ENCODE measurements at regions of chrX and their contacts with region 1.

Region 1: DNA sequence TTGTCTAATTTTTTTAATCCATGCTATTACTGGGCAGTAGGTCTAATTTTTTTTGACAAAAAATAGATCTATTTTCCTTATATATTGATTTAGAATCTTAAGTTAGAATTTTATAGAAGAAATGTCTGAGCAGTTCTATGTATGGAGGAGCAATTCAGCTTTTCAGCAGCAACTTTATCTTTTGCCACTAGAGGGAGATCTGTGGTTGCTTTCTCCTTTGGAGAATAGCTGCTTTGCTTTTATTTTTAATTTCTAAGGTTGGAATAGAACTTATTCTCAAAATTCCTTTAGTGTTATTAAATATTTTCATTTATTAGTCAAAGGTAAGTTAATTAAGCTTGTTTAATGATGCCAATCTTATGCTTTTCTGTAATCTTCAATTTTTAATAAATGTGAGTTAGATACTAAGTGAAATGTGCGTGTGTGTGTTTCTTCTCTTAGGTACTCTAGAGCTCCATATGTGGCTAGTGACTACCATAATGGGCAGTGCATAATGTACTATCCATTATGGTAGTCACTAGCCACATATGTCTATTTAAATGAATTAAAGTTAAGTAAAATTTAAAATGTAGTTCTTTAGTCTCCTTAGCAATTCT is 29.3 kb downstream of the FAM199X start:
- DNase-seq: peak; percentile 18
- H3K4me3 ChIP-seq: no peak overlapping the region
- H3K27ac ChIP-seq: no peak overlapping the region
- H3K4me1 ChIP-seq: no peaks in the 10 kb centered on the region
- H3K27me3 ChIP-seq: no peaks in the 10 kb centered on the region
- CTCF ChIP-seq: peak; percentile 80

Region 2: GRCh38 chrX:104343428-104344129 is 148.0 kb after region 1 on chrX:
- intact Hi-C with region 1: loop called (anchors 5 kb)
- DNase-seq: peak; percentile 77
- H3K4me3 ChIP-seq: no peak overlapping the region
- H3K27ac ChIP-seq: no peak overlapping the region
- H3K4me1 ChIP-seq: no peaks in the 10 kb centered on the region
- H3K27me3 ChIP-seq: no peaks in the 10 kb centered on the region
- CTCF ChIP-seq: peak; percentile 57

Measured in colonic mucosa (tissue), 4 donors.